CD8-positive, alpha-beta T cell (primary cell): ENCODE measurements at regions of chr1 and their contacts with region 1.

Region 1: GRCh38 chr1:44674113-44675000 is at the starts of genes ARMH1 and TMEM53:
- DNase-seq: peak; percentile 91 to 98 (median 96)
- ATAC-seq: peak; percentile 91
- H3K4me3 ChIP-seq: peak within 1 kb of the TSS; percentile 76 to 88
- H3K4me3 Mint-ChIP-seq: peak within 1 kb of the TSS; percentile 94
- H3K27ac ChIP-seq: peak within 1 kb of the TSS; percentile 81 to 82
- H3K27ac Mint-ChIP-seq: peak within 1 kb of the TSS; percentile 91
- H3K4me1 ChIP-seq: peaks cover 12% of the 10 kb centered on the region
- H3K4me1 Mint-ChIP-seq: peaks cover 25% of the 10 kb centered on the region
- H3K27me3 ChIP-seq: no peaks in the 10 kb centered on the region
- H3K27me3 Mint-ChIP-seq: no peaks in the 10 kb centered on the region
- CTCF ChIP-seq: no peak
- total RNA-seq, gene ARMH1: 117 to 128 TPM
- total RNA-seq, gene TMEM53: 1.2 TPM in 1 of 2 experiments, not detected in the other

Region 2: DNA sequence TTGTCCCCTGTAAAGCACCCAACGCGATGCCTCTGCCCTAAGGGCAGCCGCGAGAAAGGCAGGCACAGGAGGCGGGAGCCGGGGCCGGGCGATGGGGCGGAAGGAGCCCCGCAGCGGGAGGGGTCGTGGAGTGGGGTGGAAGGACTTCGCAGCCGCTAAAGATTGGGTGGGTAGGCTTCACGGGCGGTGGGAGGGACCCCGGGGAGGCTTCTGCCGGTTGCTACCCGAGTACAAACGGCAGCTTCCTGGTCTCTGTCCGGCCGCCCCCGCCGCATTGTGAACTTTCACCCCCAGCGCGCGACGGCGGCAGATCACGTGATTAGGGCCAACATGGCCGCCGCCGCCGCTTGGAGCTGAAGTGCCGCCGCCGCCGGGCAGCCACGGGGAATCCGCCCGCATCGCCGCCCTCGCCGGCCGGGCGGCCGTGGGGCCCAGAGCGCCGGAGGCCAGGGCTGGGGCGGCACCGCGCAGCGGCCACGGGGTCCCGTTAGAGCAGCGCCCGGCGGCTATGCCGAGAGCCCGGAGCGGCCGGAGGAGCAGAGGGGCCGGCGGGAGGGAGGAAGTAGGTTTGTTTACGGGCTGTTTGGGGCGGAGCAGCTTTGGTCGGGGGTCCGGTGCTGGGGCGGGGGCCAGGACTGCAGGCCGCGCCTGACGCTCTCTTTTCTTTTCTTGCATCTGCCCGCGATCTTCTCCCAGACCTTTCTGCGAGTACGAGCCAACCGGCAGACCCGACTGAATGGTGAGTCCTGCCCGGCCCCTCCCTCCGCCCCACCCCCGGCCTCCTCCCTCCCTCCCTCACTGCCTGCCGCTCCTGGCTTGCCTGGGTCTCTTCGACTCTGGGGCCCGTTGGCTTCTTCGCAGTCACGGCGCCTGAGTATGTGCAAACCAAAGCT is 42.5 kb before region 1 on chr1:
- CTCF ChIA-PET with region 1: interaction called, 3 read pairs
- POLR2A ChIA-PET with region 1: interaction called, 35 read pairs
- intact Hi-C with region 1: loop called (anchors 1 kb)
- DNase-seq: peak; percentile 73 to 95 (median 88)
- ATAC-seq: peak; percentile 75
- H3K4me3 ChIP-seq: peak overlapping the region; percentile 55 to 82
- H3K4me3 Mint-ChIP-seq: peak overlapping the region; percentile 90
- H3K27ac ChIP-seq: peak overlapping the region; percentile 86 to 97
- H3K27ac Mint-ChIP-seq: peak overlapping the region; percentile 98
- H3K4me1 ChIP-seq: peaks cover 20% of the 10 kb centered on the region
- H3K4me1 Mint-ChIP-seq: peaks cover 48% of the 10 kb centered on the region
- H3K27me3 ChIP-seq: no peaks in the 10 kb centered on the region
- H3K27me3 Mint-ChIP-seq: no peaks in the 10 kb centered on the region
- CTCF ChIP-seq: no peak

Region 3: DNA sequence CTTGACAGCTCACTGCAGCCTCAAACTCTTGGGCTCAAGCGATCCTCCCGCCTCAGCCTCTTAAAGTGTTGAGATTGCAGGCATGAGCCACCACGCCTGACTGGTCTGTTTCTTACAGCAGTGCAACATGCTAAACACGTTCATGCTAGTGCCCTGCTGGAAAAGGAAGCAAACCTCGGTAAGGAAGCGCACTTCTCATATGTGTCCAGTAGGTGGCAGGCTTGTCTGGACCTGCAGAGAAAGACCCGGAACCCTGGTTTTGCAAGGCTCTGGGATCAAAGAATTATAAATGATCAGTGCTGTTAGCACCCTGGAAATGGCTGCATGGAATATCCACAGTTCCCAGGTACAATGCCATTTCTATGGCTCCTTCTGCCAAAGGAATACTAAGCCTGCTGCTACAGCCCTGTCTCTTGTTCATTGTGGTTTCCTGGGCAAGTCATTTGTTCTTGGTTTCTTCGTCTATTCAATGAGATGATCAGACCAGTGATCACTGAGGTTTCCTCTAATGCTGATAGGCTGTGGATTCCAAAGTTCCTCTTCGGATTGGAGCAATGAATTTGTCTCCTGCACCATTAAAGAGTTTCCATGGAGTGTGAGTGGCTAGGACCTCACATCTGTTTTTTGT is 40.7 kb after region 1 on chr1:
- CTCF ChIA-PET with region 1: interaction called, 3 read pairs
- POLR2A ChIA-PET with region 1: no interaction called
- intact Hi-C with region 1: loop called in 1 of 2 experiments (anchors 5 kb)
- DNase-seq: peak; percentile 37 to 87 (median 63)
- ATAC-seq: peak; percentile 94
- H3K4me3 ChIP-seq: peak overlapping the region in 1 of 2 experiments; percentile 1
- H3K4me3 Mint-ChIP-seq: peak overlapping the region; percentile 64
- H3K27ac ChIP-seq: no peak overlapping the region
- H3K27ac Mint-ChIP-seq: peak overlapping the region; percentile 37
- H3K4me1 ChIP-seq: peaks cover 44% of the 10 kb centered on the region
- H3K4me1 Mint-ChIP-seq: peaks cover 44% of the 10 kb centered on the region
- H3K27me3 ChIP-seq: no peaks in the 10 kb centered on the region
- H3K27me3 Mint-ChIP-seq: no peaks in the 10 kb centered on the region
- CTCF ChIP-seq: peak; percentile 96

Region 4: DNA sequence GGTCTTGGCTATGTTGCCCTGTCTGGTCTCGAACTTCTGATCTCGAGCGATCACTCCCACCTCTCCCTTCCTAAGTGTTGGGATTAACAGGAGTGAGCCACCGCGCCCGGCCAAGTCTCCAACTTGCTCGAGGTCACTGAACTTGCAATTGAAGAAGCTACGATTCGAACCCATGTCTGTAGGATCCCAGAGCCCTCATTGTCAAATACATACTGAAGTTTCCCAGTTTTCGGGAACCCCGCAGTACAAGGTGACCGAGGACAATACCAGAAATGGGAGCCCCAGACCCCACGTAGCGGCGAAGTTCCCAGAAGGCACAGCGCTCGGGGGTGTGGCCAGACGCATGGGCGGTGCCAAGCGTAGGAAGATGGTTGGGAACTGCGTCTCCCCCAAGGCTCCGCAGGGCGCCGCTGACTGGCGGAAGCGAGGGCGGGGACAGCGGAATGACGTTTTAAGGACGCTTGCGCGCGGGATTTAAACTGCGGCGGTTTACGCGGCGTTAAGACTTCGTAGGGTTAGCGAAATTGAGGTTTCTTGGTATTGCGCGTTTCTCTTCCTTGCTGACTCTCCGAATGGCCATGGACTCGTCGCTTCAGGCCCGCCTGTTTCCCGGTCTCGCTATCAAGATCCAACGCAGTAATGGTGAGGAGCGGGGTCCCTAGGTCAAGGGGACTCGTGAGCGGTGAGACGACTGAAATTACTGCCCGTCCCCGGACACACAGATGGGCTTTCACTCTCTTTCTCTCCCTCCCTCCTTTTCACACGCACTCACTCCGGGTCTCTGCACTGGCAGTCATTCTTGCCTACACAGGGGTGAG is 65.2 kb after region 1 on chr1 and contains the start of gene KIF2C:
- CTCF ChIA-PET with region 1: no interaction called
- POLR2A ChIA-PET with region 1: no interaction called
- intact Hi-C with region 1: loop called (anchors 1 kb)
- DNase-seq: peak; percentile 93 to 98 (median 96)
- ATAC-seq: peak; percentile 100
- H3K4me3 ChIP-seq: peak within 1 kb of the TSS; percentile 81 to 84
- H3K4me3 Mint-ChIP-seq: peak within 1 kb of the TSS; percentile 93
- H3K27ac ChIP-seq: peak within 1 kb of the TSS; percentile 69 to 88
- H3K27ac Mint-ChIP-seq: peak within 1 kb of the TSS; percentile 97
- H3K4me1 ChIP-seq: peaks cover 12% of the 10 kb centered on the region
- H3K4me1 Mint-ChIP-seq: peaks cover 17% of the 10 kb centered on the region
- H3K27me3 ChIP-seq: no peaks in the 10 kb centered on the region
- H3K27me3 Mint-ChIP-seq: no peaks in the 10 kb centered on the region
- CTCF ChIP-seq: no peak
- total RNA-seq, gene KIF2C: 0.58 to 0.81 TPM

Region 5: DNA sequence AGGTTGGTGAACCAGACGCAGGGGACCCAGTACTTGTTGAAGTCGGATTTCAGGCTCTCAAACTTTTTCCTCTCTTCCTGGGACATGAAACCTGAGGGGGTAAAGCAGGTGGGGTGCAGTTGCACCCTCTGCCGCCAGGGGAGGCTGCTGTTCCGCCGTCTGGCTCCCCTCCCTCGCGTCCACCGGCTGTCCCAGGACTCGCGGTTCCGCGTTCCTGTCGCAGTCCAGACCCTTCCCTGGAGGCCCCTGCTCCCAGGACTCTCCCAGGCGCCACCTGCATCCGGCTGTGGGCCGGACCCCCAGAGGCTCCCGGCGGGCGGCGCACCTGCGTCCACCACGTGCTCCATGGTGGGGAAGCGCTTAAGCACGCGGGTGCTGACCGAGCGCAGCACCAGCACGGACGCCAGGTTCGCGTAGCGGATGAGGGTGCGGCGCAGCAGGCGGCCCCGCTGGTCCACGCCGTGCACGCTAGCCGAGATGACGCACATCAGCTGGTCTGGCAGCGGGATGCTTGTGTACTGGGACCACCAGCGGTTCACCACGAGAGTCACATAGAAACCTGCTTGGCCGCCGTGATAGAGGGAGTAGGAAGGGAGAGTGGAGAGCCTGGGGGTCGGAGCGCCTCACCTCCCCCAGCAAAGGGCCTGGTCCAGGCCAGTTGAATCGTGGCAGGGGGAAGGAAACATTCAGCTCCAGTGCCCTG is 111.9 kb after region 1 on chr1:
- CTCF ChIA-PET with region 1: no interaction called
- POLR2A ChIA-PET with region 1: no interaction called
- intact Hi-C with region 1: no loop called
- DNase-seq: peak in 8 of 9 experiments; percentile 63 to 89 (median 78)
- ATAC-seq: peak; percentile 85
- H3K4me3 ChIP-seq: peak overlapping the region; percentile 56 to 94
- H3K4me3 Mint-ChIP-seq: peak overlapping the region; percentile 82
- H3K27ac ChIP-seq: peak overlapping the region; percentile 33 to 63
- H3K27ac Mint-ChIP-seq: peak overlapping the region; percentile 86
- H3K4me1 ChIP-seq: peaks cover 34% of the 10 kb centered on the region
- H3K4me1 Mint-ChIP-seq: peaks cover 29% of the 10 kb centered on the region
- H3K27me3 ChIP-seq: no peaks in the 10 kb centered on the region
- H3K27me3 Mint-ChIP-seq: no peaks in the 10 kb centered on the region
- CTCF ChIP-seq: peak; percentile 100

Region 6: DNA sequence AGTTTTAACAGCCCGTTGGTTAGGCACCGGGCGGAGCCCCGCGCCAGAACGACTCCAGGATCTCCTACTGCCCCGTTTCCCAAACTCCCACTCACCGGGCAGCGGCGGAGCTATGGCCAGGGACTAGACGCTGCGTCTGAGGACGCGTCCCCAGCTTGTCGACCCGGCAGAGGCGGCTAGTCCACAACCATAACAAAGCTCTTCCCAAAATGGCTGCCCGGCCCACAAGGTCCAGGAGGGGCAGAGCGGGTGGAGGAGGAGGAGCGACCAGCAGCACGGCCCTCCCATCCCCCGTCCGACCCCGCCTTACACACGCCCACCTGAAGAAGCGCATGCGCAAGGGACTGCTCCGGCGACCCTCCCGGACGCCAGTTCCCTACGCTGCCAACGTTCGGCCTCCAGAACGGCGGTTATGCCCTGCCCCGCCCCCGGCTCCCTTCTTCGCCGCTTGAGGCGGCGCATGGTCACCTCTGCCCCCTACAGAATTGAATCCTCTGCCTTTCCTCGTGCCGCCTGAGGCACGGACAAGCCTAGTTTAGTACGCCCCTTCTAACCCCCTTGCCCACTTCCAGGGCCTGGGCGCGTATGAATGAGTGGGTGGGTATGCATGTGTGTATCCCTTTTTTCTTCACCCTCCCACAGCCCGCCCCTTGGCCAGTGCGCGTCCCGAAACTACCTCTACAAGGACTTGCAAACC is 1012.1 kb after region 1 on chr1 and contains the start of gene GPBP1L1:
- CTCF ChIA-PET with region 1: no interaction called
- POLR2A ChIA-PET with region 1: no interaction called
- intact Hi-C with region 1: loop called in 1 of 2 experiments (anchors 2 kb)
- DNase-seq: peak; percentile 95 to 98 (median 98)
- ATAC-seq: peak; percentile 72
- H3K4me3 ChIP-seq: peak within 1 kb of the TSS; percentile 99
- H3K4me3 Mint-ChIP-seq: peak within 1 kb of the TSS; percentile 97
- H3K27ac ChIP-seq: peak within 1 kb of the TSS; percentile 84 to 92
- H3K27ac Mint-ChIP-seq: peak within 1 kb of the TSS; percentile 100
- H3K4me1 ChIP-seq: peaks cover 39% of the 10 kb centered on the region
- H3K4me1 Mint-ChIP-seq: peaks cover 59% of the 10 kb centered on the region
- H3K27me3 ChIP-seq: no peaks in the 10 kb centered on the region
- H3K27me3 Mint-ChIP-seq: no peaks in the 10 kb centered on the region
- CTCF ChIP-seq: no peak
- total RNA-seq, gene GPBP1L1: 125 to 128 TPM